Cardiac septum (tissue), 1 donor: ENCODE measurements at regions of chr1 and their contacts with region 1.

Region 1: DNA sequence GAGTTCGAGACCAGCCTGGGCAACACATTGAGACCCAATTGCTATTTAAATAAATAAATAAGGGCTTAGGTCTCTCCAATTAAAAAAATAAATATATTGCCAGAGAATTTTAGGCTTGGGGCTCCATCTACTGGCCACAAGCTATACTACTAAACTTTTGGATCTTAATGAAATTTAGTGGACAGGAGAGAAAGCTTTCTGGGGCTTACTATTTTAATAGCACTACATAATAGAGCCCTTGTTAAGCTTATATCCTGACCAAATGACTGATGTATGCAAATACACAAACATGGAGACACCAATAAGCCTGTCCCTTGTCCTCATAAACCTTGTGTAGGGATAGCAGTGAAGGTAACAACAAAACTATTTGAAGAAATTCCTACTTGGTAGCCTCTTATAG is 18.4 kb downstream of the CCT3 start:
- DNase-seq: no peak

Region 2: DNA sequence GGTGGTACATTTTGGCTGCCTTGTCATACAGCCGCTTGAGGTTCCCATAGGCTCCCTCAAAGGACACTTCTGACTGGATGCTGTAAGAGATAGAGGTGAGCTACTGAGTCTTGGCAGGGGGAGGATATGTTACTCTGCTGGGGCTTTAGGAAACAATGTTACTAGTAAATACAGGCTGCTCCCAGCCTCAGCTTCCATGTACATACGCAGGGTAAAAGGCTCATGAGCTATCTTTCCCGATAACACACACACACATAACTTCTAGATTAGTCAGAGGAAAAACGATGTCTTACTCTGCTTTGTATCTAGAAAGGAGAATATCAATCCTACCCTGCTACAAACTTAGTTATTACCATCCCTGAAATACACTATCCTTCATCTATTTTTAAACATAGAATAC is 51.3 kb before region 1 on chr1:
- intact Hi-C with region 1: loop called (anchors 5 kb)
- DNase-seq: no peak